CD14-positive monocyte (primary cell): ENCODE measurements at regions of chr4 and their contacts with region 1.

Region 1: GRCh38 chr4:1346781-1347409 is at the start of gene UVSSA:
- DNase-seq: peak; percentile 99 to 100 (median 100)
- H3K4me3 ChIP-seq: peak within 1 kb of the TSS; percentile 59 to 86 (median 86)
- H3K4me3 Mint-ChIP-seq: peak within 1 kb of the TSS; percentile 90 to 94
- H3K27ac ChIP-seq: peak within 1 kb of the TSS; percentile 90 to 95
- H3K27ac Mint-ChIP-seq: peak within 1 kb of the TSS; percentile 93 to 98 (median 97)
- H3K4me1 ChIP-seq: peaks cover 20 to 29% of the 10 kb centered on the region in 2 donors
- H3K4me1 Mint-ChIP-seq: peaks cover 33% of the 10 kb centered on the region
- H3K27me3 ChIP-seq: no peaks in the 10 kb centered on the region
- H3K27me3 Mint-ChIP-seq: peaks cover 0 to 2% (median 0%) of the 10 kb centered on the region in 3 donors
- CTCF ChIP-seq: no peak
- polyA plus RNA-seq, gene UVSSA: 2.6 to 54.0 (median 4.8) TPM

Region 2: DNA sequence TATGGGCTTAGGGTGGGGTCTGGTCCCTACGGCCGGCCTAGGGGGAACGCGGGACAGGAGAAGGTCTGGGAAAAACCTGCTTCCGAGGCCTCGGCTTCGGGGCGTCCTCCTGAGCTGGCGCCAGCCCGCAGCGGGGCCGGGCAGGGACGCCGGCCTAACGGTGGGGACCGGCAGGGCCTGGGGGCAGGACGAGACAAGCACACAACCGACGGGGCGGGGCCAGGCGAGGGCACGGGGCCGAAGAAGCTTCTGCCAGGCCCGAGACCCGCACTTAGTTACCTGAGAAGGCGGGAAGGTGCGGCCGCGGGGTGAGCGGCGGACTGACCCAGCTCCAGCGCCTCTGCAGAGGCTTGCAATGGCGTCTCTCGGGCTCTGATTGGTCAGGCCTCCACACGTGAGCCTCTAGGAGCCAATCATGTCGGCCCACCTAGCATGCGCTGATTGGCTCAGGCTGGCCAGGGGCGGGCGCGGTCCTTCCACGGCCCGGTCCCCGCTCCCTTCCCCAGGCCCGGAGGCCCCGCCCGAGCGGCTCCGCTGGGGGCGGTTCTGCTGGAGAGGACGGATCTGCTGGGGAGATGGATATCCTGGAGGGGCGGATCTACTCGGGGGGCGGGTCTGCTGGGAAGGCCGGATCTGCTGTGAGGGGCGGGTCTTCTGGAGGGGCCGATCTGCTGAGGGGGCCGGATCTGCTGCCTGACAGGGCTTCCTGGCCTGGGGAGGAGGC is 565.2 kb before region 1 on chr4:
- intact Hi-C with region 1: loop called in 1 of 2 experiments (anchors 5 kb)
- DNase-seq: peak; percentile 96 to 99 (median 98)
- H3K4me3 ChIP-seq: peak overlapping the region; percentile 76 to 88 (median 86)
- H3K4me3 Mint-ChIP-seq: peak overlapping the region; percentile 86 to 93
- H3K27ac ChIP-seq: peak overlapping the region; percentile 83 to 98
- H3K27ac Mint-ChIP-seq: peak overlapping the region; percentile 90 to 97 (median 96)
- H3K4me1 ChIP-seq: peaks cover 32 to 38% of the 10 kb centered on the region in 2 donors
- H3K4me1 Mint-ChIP-seq: peaks cover 45% of the 10 kb centered on the region
- H3K27me3 ChIP-seq: peaks cover 4 to 24% of the 10 kb centered on the region in 2 donors
- H3K27me3 Mint-ChIP-seq: peaks cover 20 to 28% (median 23%) of the 10 kb centered on the region in 3 donors
- CTCF ChIP-seq: no peak

Region 3: DNA sequence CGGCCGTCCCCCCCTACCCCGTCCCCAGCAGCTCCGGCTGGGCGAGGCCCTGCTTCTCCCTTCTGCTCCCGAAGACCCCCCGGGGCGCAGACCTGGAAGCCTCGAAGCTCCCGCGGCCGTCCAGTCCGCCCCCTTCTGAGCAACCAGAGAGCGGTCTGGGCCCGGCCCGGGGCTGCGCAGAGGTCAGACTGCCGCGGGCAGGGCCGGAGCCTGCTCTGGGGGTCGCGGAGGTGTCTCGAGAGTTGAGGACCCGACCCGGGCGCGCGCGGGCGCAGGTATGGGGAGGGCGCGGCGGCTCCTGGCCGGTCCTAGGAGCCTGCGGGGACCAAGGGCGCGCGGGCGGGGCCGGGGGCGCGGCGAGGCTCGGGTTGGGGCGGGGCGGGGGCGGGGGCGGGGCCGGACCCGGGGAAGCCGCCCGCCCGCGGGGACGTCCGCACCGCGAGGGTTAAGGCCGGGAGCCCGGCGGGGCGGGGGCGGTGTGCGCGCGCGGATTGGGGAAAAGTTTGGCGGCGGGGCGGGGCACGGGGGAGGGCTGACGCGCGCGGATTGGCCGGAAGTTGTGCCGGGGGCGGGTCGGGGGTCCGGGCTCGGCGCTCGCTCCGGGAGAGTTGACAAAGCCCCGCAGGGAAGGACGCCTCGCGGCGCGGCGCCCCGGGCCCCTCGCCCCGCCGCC is 335.7 kb before region 1 on chr4 and contains the start of gene FGFRL1:
- intact Hi-C with region 1: loop called (anchors 5 kb)
- DNase-seq: peak; percentile 71 to 85 (median 84)
- H3K4me3 ChIP-seq: peak within 1 kb of the TSS; percentile 34 to 82 (median 60)
- H3K4me3 Mint-ChIP-seq: peak within 1 kb of the TSS; percentile 83 to 89
- H3K27ac ChIP-seq: peak within 1 kb of the TSS; percentile 48 to 82
- H3K27ac Mint-ChIP-seq: peak within 1 kb of the TSS; percentile 54 to 90 (median 79)
- H3K4me1 ChIP-seq: peaks cover 23 to 43% of the 10 kb centered on the region in 2 donors
- H3K4me1 Mint-ChIP-seq: peaks cover 18% of the 10 kb centered on the region
- H3K27me3 ChIP-seq: peaks cover 4 to 41% of the 10 kb centered on the region in 2 donors
- H3K27me3 Mint-ChIP-seq: peaks cover 27 to 40% (median 30%) of the 10 kb centered on the region in 3 donors
- CTCF ChIP-seq: no peak
- polyA plus RNA-seq, gene FGFRL1: 0.17 to 77.7 (median 0.28) TPM

Region 4: DNA sequence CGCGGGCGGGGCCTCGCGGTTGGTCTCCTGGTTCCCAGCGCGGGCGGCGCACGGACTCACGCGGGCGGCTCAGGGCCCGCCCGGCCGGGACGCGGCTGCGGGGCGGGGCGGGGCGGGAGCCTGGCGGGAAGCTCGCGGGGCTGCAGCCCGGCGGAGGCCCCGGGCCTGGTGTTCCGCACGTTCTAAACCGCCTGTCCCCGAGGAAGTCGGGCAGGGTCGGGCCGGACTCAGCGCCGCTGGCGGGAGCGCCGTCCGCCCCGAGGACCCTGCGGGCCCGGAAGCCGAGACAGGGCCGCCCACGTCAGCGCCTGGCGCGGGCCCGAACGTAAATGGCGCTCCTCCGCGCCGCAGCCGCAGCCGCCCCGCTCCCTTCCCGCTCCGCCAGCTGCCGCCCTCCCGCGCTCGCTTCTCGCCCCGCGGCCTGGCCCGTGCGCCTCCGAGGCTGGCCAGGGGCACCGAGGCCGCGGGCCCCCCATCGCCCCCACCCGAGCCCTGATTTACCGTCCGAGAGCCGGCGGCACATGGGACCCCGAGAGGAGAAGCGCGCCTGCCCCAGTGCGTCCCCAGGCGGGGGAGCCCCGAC is 97.7 kb before region 1 on chr4:
- intact Hi-C with region 1: loop called (anchors 2 kb)
- DNase-seq: peak; percentile 75 to 83 (median 82)
- H3K4me3 ChIP-seq: peak overlapping the region; percentile 62 to 81 (median 79)
- H3K4me3 Mint-ChIP-seq: peak overlapping the region; percentile 83 to 88
- H3K27ac ChIP-seq: peak overlapping the region; percentile 81 to 88
- H3K27ac Mint-ChIP-seq: peak overlapping the region; percentile 76 to 93 (median 89)
- H3K4me1 ChIP-seq: peaks cover 31 to 40% of the 10 kb centered on the region in 2 donors
- H3K4me1 Mint-ChIP-seq: peaks cover 40% of the 10 kb centered on the region
- H3K27me3 ChIP-seq: no peaks in the 10 kb centered on the region
- H3K27me3 Mint-ChIP-seq: peaks cover 0 to 6% (median 0%) of the 10 kb centered on the region in 3 donors
- CTCF ChIP-seq: no peak

Region 5: GRCh38 chr4:1300466-1301455 is 46.1 kb before region 1 on chr4:
- intact Hi-C with region 1: loop called in 1 of 2 experiments (anchors 2 kb)
- DNase-seq: peak; percentile 99 to 100 (median 99)
- H3K4me3 ChIP-seq: peak overlapping the region in 1 of 3 experiments; percentile 40
- H3K4me3 Mint-ChIP-seq: peak overlapping the region; percentile 34 to 63
- H3K27ac ChIP-seq: peak overlapping the region; percentile 99
- H3K27ac Mint-ChIP-seq: peak overlapping the region; percentile 96 to 99 (median 98)
- H3K4me1 ChIP-seq: peaks cover 31 to 36% of the 10 kb centered on the region in 2 donors
- H3K4me1 Mint-ChIP-seq: peaks cover 44% of the 10 kb centered on the region
- H3K27me3 ChIP-seq: no peaks in the 10 kb centered on the region
- H3K27me3 Mint-ChIP-seq: peaks cover 0 to 1% (median 0%) of the 10 kb centered on the region in 3 donors
- CTCF ChIP-seq: no peak

Region 6: DNA sequence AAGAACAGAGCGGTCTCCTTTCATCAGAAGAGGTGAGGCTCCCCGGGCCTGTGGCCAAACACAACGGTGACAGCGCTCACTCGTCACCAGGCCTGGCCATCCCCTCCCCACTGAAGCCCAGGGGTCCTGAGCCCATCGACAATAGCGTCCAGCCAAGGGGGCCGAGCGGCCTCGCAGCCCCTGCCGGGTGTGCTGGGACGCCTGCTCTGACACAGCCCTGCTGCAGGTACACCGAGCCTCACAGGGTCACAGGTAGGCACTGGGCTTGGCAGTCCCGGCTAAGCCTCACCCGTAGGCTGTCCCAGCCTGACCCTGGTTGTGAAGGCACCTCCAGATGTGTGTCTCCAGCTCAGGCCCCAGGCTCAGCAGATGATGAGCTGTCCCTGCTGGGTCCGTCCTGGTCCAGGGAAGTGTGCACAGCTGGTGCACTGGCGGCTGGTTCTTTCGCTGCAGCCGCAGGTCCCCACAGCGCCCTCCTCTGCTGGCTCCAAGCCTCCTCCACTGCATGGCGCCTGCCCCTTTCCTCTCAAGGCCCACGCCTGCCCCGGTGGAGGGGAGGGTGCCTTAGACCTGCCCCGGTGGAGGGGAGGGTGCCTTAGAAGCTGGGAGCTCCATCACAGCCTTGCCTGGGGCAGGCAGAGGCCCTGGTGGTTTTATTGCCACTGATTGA is 21.7 kb after region 1 on chr4:
- intact Hi-C with region 1: no loop called
- DNase-seq: no peak
- H3K4me3 ChIP-seq: no peak overlapping the region
- H3K4me3 Mint-ChIP-seq: no peak overlapping the region
- H3K27ac ChIP-seq: no peak overlapping the region
- H3K27ac Mint-ChIP-seq: peak overlapping the region in 1 of 7 donors; percentile 46
- H3K4me1 ChIP-seq: no peaks in the 10 kb centered on the region
- H3K4me1 Mint-ChIP-seq: no peaks in the 10 kb centered on the region
- H3K27me3 ChIP-seq: no peaks in the 10 kb centered on the region
- H3K27me3 Mint-ChIP-seq: peaks cover 0 to 2% (median 0%) of the 10 kb centered on the region in 3 donors
- CTCF ChIP-seq: no peak

Region 7: DNA sequence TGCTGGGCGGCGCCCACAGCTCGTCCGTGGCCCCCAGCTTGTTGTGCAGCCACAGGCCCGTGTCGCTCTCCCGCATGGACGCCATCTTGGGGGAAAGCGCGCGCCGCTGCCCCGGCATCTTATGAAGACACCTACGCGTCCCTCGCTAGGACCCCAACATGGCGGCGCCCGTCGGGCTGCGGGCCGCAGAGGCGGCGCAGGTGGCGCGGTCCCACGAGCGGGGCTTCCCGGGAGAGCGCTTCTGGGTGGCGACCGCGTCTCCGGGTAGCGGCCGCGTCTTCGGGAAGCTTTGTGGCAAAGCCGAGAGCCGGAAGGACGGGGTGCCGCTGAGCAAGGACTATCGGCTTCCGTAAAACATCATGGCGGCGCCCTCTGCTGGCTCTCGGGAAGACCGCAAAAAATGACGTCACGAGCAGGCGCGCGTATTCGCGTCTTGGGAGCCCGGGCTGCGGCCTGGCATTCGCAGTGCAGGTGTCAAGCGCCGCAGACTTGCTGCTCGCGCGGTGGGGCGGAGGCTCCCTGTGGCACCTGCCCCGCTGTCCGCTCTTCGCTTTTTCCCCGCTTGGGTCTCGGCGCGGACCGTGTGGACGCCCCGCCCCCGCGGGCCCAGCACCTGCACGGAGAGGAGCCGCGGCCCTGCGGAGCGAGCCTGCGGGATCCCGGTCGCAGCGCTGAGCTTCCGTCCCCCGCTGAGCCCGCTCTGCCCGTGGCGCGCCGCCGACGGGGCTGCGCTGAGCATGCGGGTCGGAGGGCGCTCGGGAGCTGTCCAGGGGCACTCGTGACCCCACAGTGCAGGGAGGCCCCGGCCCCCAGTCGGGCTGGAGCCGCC is 662.2 kb after region 1 on chr4 and contains the start of gene NELFA:
- intact Hi-C with region 1: loop called in 1 of 2 experiments (anchors 10 kb)
- DNase-seq: peak; percentile 89 to 93 (median 91)
- H3K4me3 ChIP-seq: peak within 1 kb of the TSS; percentile 63 to 95 (median 93)
- H3K4me3 Mint-ChIP-seq: peak within 1 kb of the TSS; percentile 86 to 90
- H3K27ac ChIP-seq: peak within 1 kb of the TSS; percentile 89 to 98
- H3K27ac Mint-ChIP-seq: peak within 1 kb of the TSS; percentile 89 to 94 (median 93)
- H3K4me1 ChIP-seq: peaks cover 38 to 44% of the 10 kb centered on the region in 2 donors
- H3K4me1 Mint-ChIP-seq: peaks cover 41% of the 10 kb centered on the region
- H3K27me3 ChIP-seq: peaks cover 0 to under 1% of the 10 kb centered on the region in 2 donors
- H3K27me3 Mint-ChIP-seq: peaks cover 5 to 12% (median 6%) of the 10 kb centered on the region in 3 donors
- CTCF ChIP-seq: no peak
- polyA plus RNA-seq, gene NELFA: 10.0 to 22.1 (median 10.5) TPM